ENCODE measurements at regions of chr9 and their contacts with region 1.

Region 1: GRCh38 chr9:113410207-113410864 is at the starts of genes C9orf43 and POLE3:
- DNase-seq: peak; percentile 95
- H3K4me3 Mint-ChIP-seq: peak within 1 kb of the TSS; percentile 98
- H3K27ac Mint-ChIP-seq: peak within 1 kb of the TSS; percentile 99
- H3K4me1 Mint-ChIP-seq: peaks cover 37% of the 10 kb centered on the region
- H3K27me3 Mint-ChIP-seq: no peaks in the 10 kb centered on the region
- total RNA-seq, gene C9orf43: 0.40 TPM
- total RNA-seq, gene POLE3: 52.5 to 55.8 TPM

Region 2: DNA sequence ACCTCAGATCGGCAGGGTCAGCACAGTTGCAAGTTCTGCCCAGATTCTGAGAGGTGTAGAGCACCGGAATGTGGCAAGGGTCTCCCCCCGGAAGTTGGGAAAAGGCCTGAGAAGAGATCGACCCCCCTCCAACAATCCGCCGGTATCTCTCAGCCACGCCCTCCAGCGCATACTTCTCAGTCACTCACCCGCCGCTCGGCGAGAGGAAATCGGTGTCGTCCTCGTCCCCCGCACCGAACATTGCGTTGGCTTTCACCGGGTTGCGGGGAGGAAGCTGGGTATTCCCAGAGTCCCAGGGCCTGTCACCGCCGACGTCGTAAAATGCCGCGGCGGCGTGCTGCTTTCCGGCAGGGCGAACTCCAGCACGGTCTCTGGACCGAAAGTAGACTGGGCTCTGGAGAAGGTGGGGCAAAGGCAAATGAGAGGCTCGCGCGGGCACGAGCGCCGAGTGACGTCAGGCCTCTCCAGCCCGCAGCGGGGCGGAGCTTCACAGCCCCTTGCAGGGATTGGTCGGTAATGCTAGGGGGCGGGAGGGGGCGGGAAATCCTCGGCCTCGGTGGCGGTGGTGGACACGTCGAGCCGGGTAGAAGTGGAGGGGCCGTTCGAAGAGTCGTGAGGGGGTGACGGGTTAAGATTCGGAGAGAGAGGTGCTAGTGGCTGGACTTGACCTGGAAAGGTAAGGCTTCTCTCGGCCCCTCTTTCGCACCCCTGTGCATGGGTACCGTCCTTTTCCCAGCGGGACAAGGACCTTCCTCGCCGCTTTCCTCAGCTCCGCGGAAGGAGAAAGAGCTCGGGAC is 189.1 kb before region 1 on chr9 and contains the starts of genes FKBP15 and SLC31A1:
- CTCF ChIA-PET with region 1: interaction called, 7 read pairs
- POLR2A ChIA-PET with region 1: interaction called, 17 read pairs
- DNase-seq: peak; percentile 97
- H3K4me3 Mint-ChIP-seq: peak within 1 kb of the TSS; percentile 92
- H3K27ac Mint-ChIP-seq: peak within 1 kb of the TSS; percentile 85
- H3K4me1 Mint-ChIP-seq: peaks cover 46% of the 10 kb centered on the region
- H3K27me3 Mint-ChIP-seq: no peaks in the 10 kb centered on the region
- total RNA-seq, gene FKBP15: 34.9 to 38.2 TPM
- total RNA-seq, gene SLC31A1: 9.2 to 10.0 TPM

Region 3: DNA sequence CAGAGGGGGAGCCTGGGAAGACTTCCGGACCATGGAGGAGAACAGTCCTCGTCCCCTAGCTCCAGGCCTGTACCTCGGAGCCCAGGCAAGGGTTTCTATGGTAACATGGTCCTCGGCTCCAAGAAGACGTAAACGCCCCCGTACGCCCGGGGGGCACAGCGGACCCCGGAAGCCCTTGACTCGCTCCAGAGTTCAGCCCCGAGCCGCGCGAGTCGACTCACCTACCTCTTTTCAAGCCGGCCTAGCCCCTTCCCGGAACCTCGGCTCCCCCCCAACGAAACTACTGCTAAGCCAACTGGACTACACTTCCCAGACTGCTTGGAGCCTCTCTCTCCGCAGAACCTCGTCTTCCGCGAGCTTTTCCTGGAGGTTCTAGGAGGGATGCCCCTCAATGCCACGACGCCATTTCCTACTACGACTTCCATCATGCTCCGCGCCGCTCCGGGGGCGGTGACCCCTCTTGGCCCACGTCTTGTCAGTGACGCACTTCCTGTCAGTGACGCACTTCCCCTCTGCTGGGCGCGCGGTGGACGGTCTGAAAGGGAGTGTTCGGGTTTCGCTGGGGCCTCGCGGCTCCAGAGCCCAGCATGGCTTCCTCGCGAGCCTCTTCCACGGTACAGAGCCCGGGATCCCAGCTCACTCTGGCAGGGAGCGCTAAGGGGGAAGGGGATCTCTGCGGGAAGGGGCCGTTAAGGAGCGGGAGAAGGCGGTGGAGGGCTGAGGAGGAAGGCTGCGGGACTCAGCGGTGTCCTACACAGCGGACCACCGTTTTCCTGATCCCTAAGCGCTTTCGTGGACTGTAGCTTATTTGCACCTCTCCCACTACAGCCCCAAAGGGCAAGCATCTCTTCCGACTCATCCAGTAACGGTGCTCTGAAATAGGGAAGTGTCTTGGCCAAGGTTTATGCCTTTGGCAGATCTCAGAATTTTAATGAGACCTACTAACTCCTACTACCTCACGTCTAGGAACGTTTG is 134.9 kb before region 1 on chr9 and contains the starts of genes CDC26 and PRPF4:
- CTCF ChIA-PET with region 1: interaction called, 32 read pairs
- POLR2A ChIA-PET with region 1: interaction called, 56 read pairs
- DNase-seq: peak; percentile 96
- H3K4me3 Mint-ChIP-seq: no peak within 1 kb of the TSS
- H3K27ac Mint-ChIP-seq: no peak within 1 kb of the TSS
- H3K4me1 Mint-ChIP-seq: peaks cover 39% of the 10 kb centered on the region
- H3K27me3 Mint-ChIP-seq: no peaks in the 10 kb centered on the region
- total RNA-seq, gene CDC26: 34.3 to 38.5 TPM
- total RNA-seq, gene PRPF4: 27.7 to 28.2 TPM

Region 4: GRCh38 chr9:113349445-113350094 is 60.8 kb before region 1 on chr9 and contains the start of gene BSPRY:
- CTCF ChIA-PET with region 1: interaction called, 3 read pairs
- POLR2A ChIA-PET with region 1: interaction called, 29 read pairs
- DNase-seq: peak; percentile 53
- H3K4me3 Mint-ChIP-seq: peak within 1 kb of the TSS; percentile 82
- H3K27ac Mint-ChIP-seq: peak within 1 kb of the TSS; percentile 63
- H3K4me1 Mint-ChIP-seq: peaks cover 52% of the 10 kb centered on the region
- H3K27me3 Mint-ChIP-seq: peaks cover 11% of the 10 kb centered on the region
- total RNA-seq, gene BSPRY: 7.1 to 7.3 TPM

Region 5: GRCh38 chr9:113376634-113377567 is 33.4 kb before region 1 on chr9 and contains the start of gene HDHD3:
- CTCF ChIA-PET with region 1: interaction called, 4 read pairs
- POLR2A ChIA-PET with region 1: interaction called, 25 read pairs
- DNase-seq: peak; percentile 85
- H3K4me3 Mint-ChIP-seq: peak within 1 kb of the TSS; percentile 76
- H3K27ac Mint-ChIP-seq: peak within 1 kb of the TSS; percentile 67
- H3K4me1 Mint-ChIP-seq: peaks cover 24% of the 10 kb centered on the region
- H3K27me3 Mint-ChIP-seq: no peaks in the 10 kb centered on the region
- total RNA-seq, gene HDHD3: 16.1 to 16.5 TPM

Region 6: GRCh38 chr9:113511856-113512761 is 101.8 kb after region 1 on chr9:
- CTCF ChIA-PET with region 1: interaction called, 9 read pairs
- POLR2A ChIA-PET with region 1: interaction called, 18 read pairs
- DNase-seq: peak; percentile 79
- H3K4me3 Mint-ChIP-seq: peak overlapping the region; percentile 23
- H3K27ac Mint-ChIP-seq: peak overlapping the region; percentile 86
- H3K4me1 Mint-ChIP-seq: peaks cover 46% of the 10 kb centered on the region
- H3K27me3 Mint-ChIP-seq: peaks cover 3% of the 10 kb centered on the region

Region 7: GRCh38 chr9:113558632-113559502 is 148.5 kb after region 1 on chr9:
- CTCF ChIA-PET with region 1: no interaction called
- POLR2A ChIA-PET with region 1: no interaction called
- DNase-seq: no peak
- H3K4me3 Mint-ChIP-seq: no peak overlapping the region
- H3K27ac Mint-ChIP-seq: no peak overlapping the region
- H3K4me1 Mint-ChIP-seq: peaks cover 20% of the 10 kb centered on the region
- H3K27me3 Mint-ChIP-seq: no peaks in the 10 kb centered on the region

Region 8: DNA sequence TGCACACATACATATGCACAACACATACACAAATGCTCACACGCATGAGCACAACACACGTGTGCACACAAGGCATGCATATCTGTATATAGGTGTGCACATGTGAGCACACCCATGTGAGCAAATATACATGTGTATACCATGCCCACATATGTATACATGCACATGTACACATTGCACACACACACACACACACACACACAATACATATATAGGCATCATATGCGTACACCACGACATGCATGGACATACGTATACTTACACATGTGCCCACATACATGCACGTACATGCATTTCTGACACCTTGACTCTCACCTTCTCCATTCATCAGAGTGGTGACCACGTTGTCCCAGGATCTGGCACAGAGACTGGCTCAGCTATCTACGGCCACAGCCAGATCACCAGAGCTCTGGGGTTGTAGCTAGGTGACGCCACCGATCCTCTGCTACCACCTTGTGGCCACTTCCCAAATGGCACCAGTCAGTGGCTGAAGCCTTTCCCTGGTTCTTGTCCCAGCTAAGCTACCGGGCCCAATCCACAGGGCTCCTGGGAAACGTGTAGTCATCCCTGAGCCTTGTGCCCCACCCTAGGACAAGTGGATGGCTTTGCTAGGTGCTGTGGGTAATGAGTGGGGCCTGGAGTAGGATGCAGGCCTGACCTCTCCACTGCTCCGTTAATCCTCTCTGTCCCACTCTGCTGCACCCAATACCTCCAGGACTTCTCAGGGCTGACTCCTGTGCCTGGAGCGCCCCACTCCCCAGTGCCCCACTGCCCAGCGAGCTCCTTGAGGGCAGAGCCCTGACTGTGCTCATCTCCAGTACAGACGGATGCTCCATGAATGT is 247.6 kb after region 1 on chr9:
- CTCF ChIA-PET with region 1: interaction called, 29 read pairs
- POLR2A ChIA-PET with region 1: no interaction called
- DNase-seq: peak; percentile 81
- H3K4me3 Mint-ChIP-seq: no peak overlapping the region
- H3K27ac Mint-ChIP-seq: no peak overlapping the region
- H3K4me1 Mint-ChIP-seq: peaks cover 7% of the 10 kb centered on the region
- H3K27me3 Mint-ChIP-seq: peaks cover 34% of the 10 kb centered on the region

Region 9: GRCh38 chr9:114155263-114155972 is 745.1 kb after region 1 on chr9 and contains the start of gene COL27A1:
- CTCF ChIA-PET with region 1: no interaction called
- POLR2A ChIA-PET with region 1: no interaction called
- DNase-seq: peak; percentile 80
- H3K4me3 Mint-ChIP-seq: peak within 1 kb of the TSS; percentile 75
- H3K27ac Mint-ChIP-seq: no peak within 1 kb of the TSS
- H3K4me1 Mint-ChIP-seq: peaks cover 17% of the 10 kb centered on the region
- H3K27me3 Mint-ChIP-seq: peaks cover 50% of the 10 kb centered on the region
- total RNA-seq, gene COL27A1: 0.50 to 1.2 TPM